Right ventricle myocardium superior (tissue), 1 donor: ENCODE measurements at regions of chr4 and their contacts with region 1.

Region 1: DNA sequence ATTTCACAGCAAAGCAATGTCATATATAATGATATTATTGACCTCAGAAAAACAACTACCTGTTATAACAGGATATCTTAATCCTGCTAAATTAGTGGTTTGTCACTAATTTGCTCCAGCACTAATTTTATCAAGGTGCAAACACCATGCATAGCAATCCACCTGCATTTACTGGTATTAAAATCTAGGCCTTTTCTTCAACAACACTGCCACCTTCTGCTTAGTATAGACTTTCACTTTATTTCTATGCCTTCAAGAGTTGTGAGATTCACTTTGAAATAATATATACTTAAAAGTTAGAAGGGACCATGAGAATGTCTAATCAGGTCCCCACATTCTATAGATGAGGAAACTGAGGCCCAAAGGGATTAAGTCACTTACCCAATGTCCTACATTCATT is 82.1 kb upstream of the IQCM start:
- DNase-seq: no peak
- ATAC-seq: peak; percentile 75

Region 2: DNA sequence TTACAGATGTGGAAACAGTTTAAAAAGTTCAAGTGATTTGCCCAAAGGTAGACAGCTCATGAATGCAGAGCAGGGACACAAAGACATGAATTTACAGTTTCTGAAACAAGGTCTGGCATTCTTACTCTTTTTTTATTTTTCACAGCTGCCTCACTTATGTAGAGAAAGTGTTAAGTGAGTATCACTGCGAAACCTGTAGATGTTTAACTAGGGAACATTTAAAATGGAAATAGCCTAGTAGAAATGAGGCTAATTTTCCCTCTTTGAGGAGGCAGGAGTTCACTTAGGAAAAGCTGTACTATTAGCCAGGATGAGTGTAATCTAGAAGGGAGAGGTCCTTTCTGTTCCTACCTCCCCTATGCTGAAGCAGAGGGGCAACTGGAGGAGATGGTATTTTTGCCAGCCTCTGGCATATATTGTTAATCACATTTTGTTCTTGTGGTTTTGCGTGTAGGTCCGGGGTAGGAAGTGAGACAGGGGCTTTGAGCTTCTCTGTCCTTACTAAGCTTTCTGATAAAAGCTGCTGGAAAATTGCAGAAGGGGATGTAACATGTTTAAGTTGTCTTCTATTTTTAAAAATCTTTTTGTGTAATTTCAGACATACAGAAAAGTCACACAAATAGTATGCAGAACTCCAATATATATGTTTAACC is 962.7 kb before region 1 on chr4:
- intact Hi-C with region 1: no loop called
- DNase-seq: no peak
- ATAC-seq: no peak

Region 3: GRCh38 chr4:149370785-149371420 is 526.9 kb before region 1 on chr4:
- intact Hi-C with region 1: loop called (anchors 5 kb)
- DNase-seq: no peak
- ATAC-seq: peak; percentile 73

Region 4: GRCh38 chr4:149676076-149676475 is 221.7 kb before region 1 on chr4:
- intact Hi-C with region 1: no loop called
- DNase-seq: no peak
- ATAC-seq: no peak

Region 5: GRCh38 chr4:149964001-149964796 is 66.4 kb after region 1 on chr4:
- intact Hi-C with region 1: no loop called
- DNase-seq: no peak
- ATAC-seq: no peak

Region 6: DNA sequence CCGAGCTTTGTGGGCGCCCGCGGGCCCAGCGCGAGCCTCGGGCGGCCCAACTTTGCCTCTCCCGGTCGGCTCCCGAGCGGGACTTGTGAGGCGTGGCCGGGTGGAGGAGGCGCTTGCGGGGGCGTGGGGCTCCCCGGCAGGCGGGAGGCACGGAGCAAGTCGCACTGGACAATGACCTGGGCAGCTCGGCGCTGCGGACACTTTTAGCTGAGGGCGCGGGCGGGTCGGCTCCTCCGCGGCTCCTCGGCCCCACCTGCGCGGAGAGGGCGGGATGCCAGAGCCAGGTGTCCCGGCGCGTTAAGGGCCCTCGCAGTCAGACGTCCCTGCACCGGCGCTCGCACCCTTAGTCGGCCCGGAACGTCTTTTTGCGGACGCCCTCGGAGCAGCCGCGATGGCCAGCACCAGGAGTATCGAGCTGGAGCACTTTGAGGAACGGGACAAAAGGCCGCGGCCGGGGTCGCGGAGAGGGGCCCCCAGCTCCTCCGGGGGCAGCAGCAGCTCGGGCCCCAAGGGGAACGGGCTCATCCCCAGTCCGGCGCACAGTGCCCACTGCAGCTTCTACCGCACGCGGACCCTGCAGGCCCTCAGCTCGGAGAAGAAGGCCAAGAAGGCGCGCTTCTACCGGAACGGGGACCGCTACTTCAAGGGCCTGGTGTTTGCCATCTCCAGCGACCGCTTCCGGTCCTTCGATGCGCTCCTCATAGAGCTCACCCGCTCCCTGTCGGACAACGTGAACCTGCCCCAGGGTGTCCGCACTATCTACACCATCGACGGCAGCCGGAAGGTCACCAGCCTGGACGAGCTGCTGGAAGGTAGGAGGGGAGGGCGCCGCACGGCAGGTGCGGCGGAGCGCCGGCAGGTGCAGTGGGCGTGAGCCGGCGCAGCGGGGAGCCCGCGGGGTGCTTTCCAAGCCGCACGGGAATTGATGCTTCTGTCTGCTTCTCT is 181.1 kb after region 1 on chr4:
- intact Hi-C with region 1: no loop called
- DNase-seq: peak; percentile 77
- ATAC-seq: peak; percentile 62